ENCODE measurements at regions of chr14 and their contacts with region 1.

Region 1: GRCh38 chr14:93055651-93056115 is 60.0 kb downstream of the ITPK1 start:
- DNase-seq: no peak
- ATAC-seq: no peak
- H3K4me3 ChIP-seq: no peak overlapping the region
- H3K4me3 Mint-ChIP-seq: no peak overlapping the region
- H3K27ac ChIP-seq: no peak overlapping the region
- H3K27ac Mint-ChIP-seq: no peak overlapping the region
- H3K4me1 ChIP-seq: peaks cover 0 to 30% of the 10 kb centered on the region in 2 experiments
- H3K4me1 Mint-ChIP-seq: peaks cover 15 to 44% (median 28%) of the 10 kb centered on the region in 3 donors
- H3K27me3 ChIP-seq: no peaks in the 10 kb centered on the region
- H3K27me3 Mint-ChIP-seq: no peaks in the 10 kb centered on the region

Region 2: GRCh38 chr14:93075891-93076290 is 20.2 kb after region 1 on chr14:
- CTCF ChIA-PET with region 1: no interaction called
- POLR2A ChIA-PET with region 1: interaction called in 1 of 2 experiments, 16 read pairs
- DNase-seq: no peak
- ATAC-seq: no peak
- H3K4me3 ChIP-seq: no peak overlapping the region
- H3K4me3 Mint-ChIP-seq: peak overlapping the region in 1 of 3 donors; percentile 30
- H3K27ac ChIP-seq: no peak overlapping the region
- H3K27ac Mint-ChIP-seq: peak overlapping the region in 1 of 2 donors; percentile 55
- H3K4me1 ChIP-seq: peaks cover 5 to 74% of the 10 kb centered on the region in 2 experiments
- H3K4me1 Mint-ChIP-seq: peaks cover 53 to 67% (median 63%) of the 10 kb centered on the region in 3 donors
- H3K27me3 ChIP-seq: no peaks in the 10 kb centered on the region
- H3K27me3 Mint-ChIP-seq: no peaks in the 10 kb centered on the region